ENCODE measurements at regions of chr15 and their contacts with region 1.

Region 1: DNA sequence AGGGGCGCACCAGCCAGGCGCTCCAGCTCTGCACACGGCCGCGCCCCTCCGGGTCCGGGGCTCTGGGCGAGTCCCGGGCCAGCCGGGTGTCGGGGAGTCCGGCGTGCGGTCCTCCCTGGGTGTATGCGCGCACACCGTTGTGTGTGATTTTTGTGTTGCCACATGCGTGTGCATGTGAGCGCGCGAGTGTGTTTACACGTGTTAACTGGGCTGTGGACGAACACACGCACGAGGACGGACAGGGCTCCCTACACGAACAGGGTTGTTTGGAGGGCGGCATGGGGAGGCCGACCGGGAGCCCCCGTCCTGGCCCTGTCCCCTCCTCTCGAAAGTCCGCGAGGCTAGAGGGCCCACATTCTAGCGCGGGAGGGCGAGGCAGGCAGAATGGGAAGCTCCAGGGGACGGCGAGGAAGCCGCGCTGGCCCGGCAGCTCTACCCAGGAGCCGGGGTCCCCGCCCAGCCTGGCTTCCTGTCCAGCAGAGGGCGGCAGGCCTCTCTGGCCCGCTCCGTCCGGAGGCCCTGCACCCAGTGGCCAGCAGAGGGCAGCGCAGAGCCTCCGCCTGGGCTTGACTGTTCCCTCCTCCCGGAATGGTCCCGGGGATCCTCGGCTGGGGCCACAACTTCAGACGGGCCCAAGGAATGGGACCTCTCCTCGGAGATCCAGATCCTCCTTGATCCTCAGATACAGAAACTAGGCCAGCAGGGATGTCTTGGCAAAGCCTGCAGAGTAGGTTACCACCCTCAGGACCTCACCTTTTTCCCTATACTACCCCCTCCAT is 611 bp upstream of the LINGO1 start:
- DNase-seq: peak; percentile 67
- H3K4me3 Mint-ChIP-seq: no peak overlapping the region
- H3K27ac Mint-ChIP-seq: no peak overlapping the region
- H3K4me1 Mint-ChIP-seq: peaks cover 9% of the 10 kb centered on the region
- H3K27me3 Mint-ChIP-seq: peaks cover 57% of the 10 kb centered on the region

Region 2: GRCh38 chr15:77821188-77821958 is 188.1 kb after region 1 on chr15:
- CTCF ChIA-PET with region 1: interaction called, 20 read pairs
- POLR2A ChIA-PET with region 1: no interaction called
- DNase-seq: peak; percentile 34
- H3K4me3 Mint-ChIP-seq: no peak overlapping the region
- H3K27ac Mint-ChIP-seq: no peak overlapping the region
- H3K4me1 Mint-ChIP-seq: peaks cover 4% of the 10 kb centered on the region
- H3K27me3 Mint-ChIP-seq: peaks cover 50% of the 10 kb centered on the region